ENCODE measurements at regions of chrX and their contacts with region 1.

Region 1: GRCh38 chrX:135003876-135004623 is 13.3 kb downstream of the SMIM10 start:
- DNase-seq: peak; percentile 97
- H3K4me3 Mint-ChIP-seq: peak overlapping the region; percentile 91
- H3K27ac Mint-ChIP-seq: peak overlapping the region; percentile 80
- H3K4me1 Mint-ChIP-seq: peaks cover 9% of the 10 kb centered on the region
- H3K27me3 Mint-ChIP-seq: peaks cover 13% of the 10 kb centered on the region

Region 2: GRCh38 chrX:134969726-134970125 is 34.3 kb before region 1 on chrX:
- intact Hi-C with region 1: loop called (anchors 1 kb)
- DNase-seq: no peak
- H3K4me3 Mint-ChIP-seq: no peak overlapping the region
- H3K27ac Mint-ChIP-seq: no peak overlapping the region
- H3K4me1 Mint-ChIP-seq: peaks cover 1% of the 10 kb centered on the region
- H3K27me3 Mint-ChIP-seq: peaks cover 9% of the 10 kb centered on the region

Region 3: GRCh38 chrX:135024526-135024925 is 20.5 kb after region 1 on chrX:
- intact Hi-C with region 1: loop called (anchors 1 kb)
- DNase-seq: no peak
- H3K4me3 Mint-ChIP-seq: no peak overlapping the region
- H3K27ac Mint-ChIP-seq: no peak overlapping the region
- H3K4me1 Mint-ChIP-seq: peaks cover 13% of the 10 kb centered on the region
- H3K27me3 Mint-ChIP-seq: peaks cover 43% of the 10 kb centered on the region

Region 4: DNA sequence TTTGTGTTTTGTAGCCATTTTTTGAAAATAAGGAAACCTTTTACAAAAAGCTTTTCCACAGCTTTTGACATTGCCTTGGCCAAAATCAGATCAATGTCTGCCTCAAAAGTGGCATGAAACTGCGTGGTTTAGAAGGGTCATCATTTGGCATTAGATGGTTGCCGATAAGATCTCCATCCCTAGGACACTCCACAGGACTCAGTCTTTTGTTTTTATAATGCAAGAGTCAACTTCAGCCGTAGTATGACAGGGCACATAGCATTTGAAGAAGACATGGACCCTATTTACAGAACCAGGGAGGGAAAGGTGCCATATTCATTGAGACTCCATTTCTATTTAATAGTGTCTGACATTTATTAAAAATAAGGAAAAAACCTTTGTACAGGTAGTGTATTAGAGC is 46.6 kb after region 1 on chrX:
- intact Hi-C with region 1: loop called (anchors 1 kb)
- DNase-seq: no peak
- H3K4me3 Mint-ChIP-seq: peak overlapping the region; percentile 91
- H3K27ac Mint-ChIP-seq: peak overlapping the region; percentile 79
- H3K4me1 Mint-ChIP-seq: peaks cover 17% of the 10 kb centered on the region
- H3K27me3 Mint-ChIP-seq: no peaks in the 10 kb centered on the region